ENCODE measurements at regions of chr2 and their contacts with region 1.

Region 1: GRCh38 chr2:71299507-71299906 is 32.1 kb upstream of the ZNF638 start:
- DNase-seq: peak in 3 of 9 experiments; percentile 12 to 62 (median 48)
- ATAC-seq: no peak
- H3K4me3 ChIP-seq: no peak overlapping the region
- H3K4me3 Mint-ChIP-seq: no peak overlapping the region
- H3K27ac ChIP-seq: no peak overlapping the region
- H3K27ac Mint-ChIP-seq: no peak overlapping the region
- H3K4me1 ChIP-seq: no peaks in the 10 kb centered on the region
- H3K4me1 Mint-ChIP-seq: no peaks in the 10 kb centered on the region
- H3K27me3 ChIP-seq: no peaks in the 10 kb centered on the region
- H3K27me3 Mint-ChIP-seq: peaks cover 6% of the 10 kb centered on the region
- CTCF ChIP-seq: peak; percentile 92

Region 2: DNA sequence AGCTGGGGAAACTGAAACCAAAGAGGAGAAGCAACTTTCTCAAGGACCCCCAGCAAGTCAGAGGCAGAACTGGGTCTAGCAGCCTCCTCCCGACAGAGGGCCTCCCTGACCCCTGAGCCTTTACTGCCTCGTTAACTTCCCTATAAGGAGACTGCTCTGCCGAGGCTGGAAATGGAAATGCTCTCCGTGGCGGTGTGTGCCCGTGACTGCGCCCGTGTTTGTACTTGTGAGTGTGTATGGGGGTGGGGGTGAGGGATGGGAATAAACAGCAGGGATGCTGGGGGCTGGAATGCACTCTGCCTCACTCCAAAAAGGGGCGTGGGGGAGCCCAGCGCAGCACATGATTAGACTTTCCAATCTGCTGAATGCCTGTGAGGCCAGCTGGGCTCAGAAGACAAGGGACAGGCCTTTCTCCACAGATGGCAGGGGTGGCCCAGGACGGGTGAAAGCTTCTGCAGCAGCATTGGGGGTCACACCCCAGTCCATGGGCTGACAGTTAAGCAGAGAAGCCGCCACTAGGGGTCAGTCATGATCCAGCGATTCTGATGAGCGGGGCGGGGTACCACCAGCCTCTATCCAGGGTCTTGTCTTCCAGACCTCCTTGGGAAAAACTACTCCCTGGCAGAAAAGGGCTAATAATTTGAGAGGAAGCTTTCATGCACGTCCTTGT is 142.2 kb before region 1 on chr2:
- CTCF ChIA-PET with region 1: interaction called, 17 read pairs
- POLR2A ChIA-PET with region 1: no interaction called
- intact Hi-C with region 1: no loop called
- DNase-seq: peak; percentile 38 to 73 (median 59)
- ATAC-seq: peak; percentile 70
- H3K4me3 ChIP-seq: no peak overlapping the region
- H3K4me3 Mint-ChIP-seq: no peak overlapping the region
- H3K27ac ChIP-seq: no peak overlapping the region
- H3K27ac Mint-ChIP-seq: no peak overlapping the region
- H3K4me1 ChIP-seq: no peaks in the 10 kb centered on the region
- H3K4me1 Mint-ChIP-seq: peaks cover 8% of the 10 kb centered on the region
- H3K27me3 ChIP-seq: peaks cover 0 to 2% of the 10 kb centered on the region in 2 experiments
- H3K27me3 Mint-ChIP-seq: peaks cover 10% of the 10 kb centered on the region
- CTCF ChIP-seq: peak; percentile 58

Region 3: DNA sequence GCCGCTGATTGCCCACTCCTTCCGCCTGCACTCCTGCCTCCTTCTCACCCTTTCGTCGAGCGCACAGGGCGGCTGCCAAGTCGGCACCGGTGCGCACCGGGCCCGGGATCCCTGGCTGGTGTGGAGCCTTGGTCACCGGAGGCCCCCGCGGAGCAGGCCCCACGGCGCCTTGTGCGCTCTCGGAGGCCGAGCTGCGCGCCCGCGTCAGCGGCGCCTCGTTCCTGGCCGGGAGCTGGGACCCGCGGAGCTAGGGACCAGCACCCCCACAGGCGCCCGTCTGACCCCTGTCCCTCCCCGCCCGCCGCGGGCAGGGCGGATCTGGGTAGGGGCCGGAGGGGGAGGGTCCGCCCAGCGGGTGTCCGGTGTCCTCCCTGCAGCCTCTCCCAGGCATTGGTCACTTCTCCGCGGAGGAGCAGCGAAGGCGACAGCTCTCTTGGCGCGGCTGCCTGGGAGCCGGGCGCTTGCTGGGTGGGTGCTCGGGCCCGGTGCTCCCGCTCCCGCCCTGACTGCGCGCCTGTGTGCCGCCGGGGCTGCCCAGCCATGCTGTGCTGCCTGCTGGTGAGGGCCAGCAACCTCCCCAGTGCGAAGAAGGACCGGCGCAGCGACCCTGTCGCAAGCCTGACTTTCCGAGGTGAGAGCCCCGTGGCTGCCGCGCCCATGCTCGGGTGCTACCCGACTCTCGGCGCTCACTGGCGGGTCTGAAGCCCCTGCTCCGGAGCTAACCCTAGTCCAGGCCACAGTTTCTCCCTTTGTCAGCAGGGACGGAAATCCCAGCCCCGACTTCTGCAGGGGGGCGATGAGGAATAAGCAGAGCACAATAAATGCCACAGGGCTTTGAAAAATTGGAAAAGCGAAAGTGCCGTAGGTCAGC is 167.0 kb after region 1 on chr2:
- CTCF ChIA-PET with region 1: interaction called, 10 read pairs
- POLR2A ChIA-PET with region 1: no interaction called
- intact Hi-C with region 1: no loop called
- DNase-seq: peak in 1 of 9 experiments; percentile 25
- ATAC-seq: no peak
- H3K4me3 ChIP-seq: peak overlapping the region; percentile 14 to 65
- H3K4me3 Mint-ChIP-seq: peak overlapping the region; percentile 76
- H3K27ac ChIP-seq: no peak overlapping the region
- H3K27ac Mint-ChIP-seq: no peak overlapping the region
- H3K4me1 ChIP-seq: no peaks in the 10 kb centered on the region
- H3K4me1 Mint-ChIP-seq: peaks cover 9% of the 10 kb centered on the region
- H3K27me3 ChIP-seq: peaks cover 4 to 12% of the 10 kb centered on the region in 2 experiments
- H3K27me3 Mint-ChIP-seq: peaks cover 30% of the 10 kb centered on the region
- CTCF ChIP-seq: no peak

Region 4: DNA sequence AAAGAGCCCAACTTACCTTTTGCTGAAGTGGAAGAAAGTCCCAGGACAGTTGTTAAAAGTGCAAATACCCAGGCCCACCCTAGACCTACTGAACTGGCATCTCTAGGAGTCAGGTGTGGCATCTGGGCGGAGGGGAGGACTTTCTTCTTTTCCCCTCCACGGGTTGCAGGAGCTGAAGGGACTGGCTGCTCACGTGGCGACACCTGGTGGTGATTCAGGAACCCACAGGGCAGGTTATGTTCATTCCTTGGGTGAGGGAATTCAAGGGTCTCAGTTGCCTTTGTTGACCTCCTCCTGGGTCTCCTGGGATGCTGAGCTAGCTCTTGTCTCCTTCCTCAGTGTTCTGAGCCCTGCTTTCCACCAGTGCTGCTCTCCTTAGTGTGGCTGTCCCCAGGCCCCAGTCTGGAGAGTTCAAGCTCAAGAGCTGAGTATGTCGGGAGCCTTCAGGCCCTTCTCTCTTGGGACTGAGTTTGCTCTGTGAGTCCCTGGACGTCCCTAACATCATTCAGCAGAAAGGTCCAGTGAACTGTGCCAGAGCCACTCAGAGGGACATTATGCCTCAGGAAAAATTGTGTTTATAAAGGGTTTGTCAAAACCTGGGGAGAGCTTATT is 210.8 kb after region 1 on chr2:
- CTCF ChIA-PET with region 1: interaction called, 322 read pairs
- POLR2A ChIA-PET with region 1: interaction called, 3 read pairs
- intact Hi-C with region 1: loop called in 1 of 2 experiments (anchors 1 kb)
- DNase-seq: peak; percentile 42 to 82 (median 72)
- ATAC-seq: peak; percentile 62
- H3K4me3 ChIP-seq: no peak overlapping the region
- H3K4me3 Mint-ChIP-seq: no peak overlapping the region
- H3K27ac ChIP-seq: no peak overlapping the region
- H3K27ac Mint-ChIP-seq: no peak overlapping the region
- H3K4me1 ChIP-seq: no peaks in the 10 kb centered on the region
- H3K4me1 Mint-ChIP-seq: peaks cover 2% of the 10 kb centered on the region
- H3K27me3 ChIP-seq: peaks cover 0 to 3% of the 10 kb centered on the region in 2 experiments
- H3K27me3 Mint-ChIP-seq: peaks cover 2% of the 10 kb centered on the region
- CTCF ChIP-seq: peak; percentile 87

Region 5: DNA sequence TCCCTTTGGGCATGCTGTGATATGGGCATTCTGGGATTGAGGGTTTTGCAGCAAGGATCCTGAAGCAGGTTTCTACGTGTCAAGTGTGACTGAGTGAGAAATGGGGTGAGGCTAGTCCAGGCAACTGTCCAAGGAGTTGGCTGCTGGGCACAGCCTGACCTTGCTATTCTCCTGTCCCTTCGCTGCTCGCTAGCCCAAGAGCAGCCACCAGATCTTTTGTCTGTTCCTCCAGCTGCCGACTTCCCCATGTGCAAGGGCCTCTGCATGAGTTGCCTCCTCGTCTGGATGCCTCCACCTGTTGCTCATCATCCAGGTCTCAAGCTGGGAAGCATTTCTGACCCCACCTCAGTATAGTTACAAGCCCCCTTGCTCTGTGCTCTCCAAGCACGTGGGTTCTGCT is 225.0 kb after region 1 on chr2:
- CTCF ChIA-PET with region 1: interaction called, 15 read pairs
- POLR2A ChIA-PET with region 1: no interaction called
- intact Hi-C with region 1: no loop called
- DNase-seq: no peak
- ATAC-seq: no peak
- H3K4me3 ChIP-seq: no peak overlapping the region
- H3K4me3 Mint-ChIP-seq: no peak overlapping the region
- H3K27ac ChIP-seq: no peak overlapping the region
- H3K27ac Mint-ChIP-seq: no peak overlapping the region
- H3K4me1 ChIP-seq: no peaks in the 10 kb centered on the region
- H3K4me1 Mint-ChIP-seq: no peaks in the 10 kb centered on the region
- H3K27me3 ChIP-seq: no peaks in the 10 kb centered on the region
- H3K27me3 Mint-ChIP-seq: peaks cover 19% of the 10 kb centered on the region
- CTCF ChIP-seq: no peak

Region 6: GRCh38 chr2:72579591-72580180 is 1280.2 kb after region 1 on chr2:
- CTCF ChIA-PET with region 1: no interaction called
- POLR2A ChIA-PET with region 1: no interaction called
- intact Hi-C with region 1: loop called in 1 of 2 experiments (anchors 5 kb)
- DNase-seq: peak in 2 of 9 experiments; percentile 20 to 35
- ATAC-seq: no peak
- H3K4me3 ChIP-seq: no peak overlapping the region
- H3K4me3 Mint-ChIP-seq: no peak overlapping the region
- H3K27ac ChIP-seq: no peak overlapping the region
- H3K27ac Mint-ChIP-seq: no peak overlapping the region
- H3K4me1 ChIP-seq: no peaks in the 10 kb centered on the region
- H3K4me1 Mint-ChIP-seq: peaks cover 6% of the 10 kb centered on the region
- H3K27me3 ChIP-seq: no peaks in the 10 kb centered on the region
- H3K27me3 Mint-ChIP-seq: no peaks in the 10 kb centered on the region
- CTCF ChIP-seq: peak; percentile 47